Posterior cingulate gyrus (tissue), 11 donors: ENCODE measurements at regions of chr16 and their contacts with region 1.

Region 1: DNA sequence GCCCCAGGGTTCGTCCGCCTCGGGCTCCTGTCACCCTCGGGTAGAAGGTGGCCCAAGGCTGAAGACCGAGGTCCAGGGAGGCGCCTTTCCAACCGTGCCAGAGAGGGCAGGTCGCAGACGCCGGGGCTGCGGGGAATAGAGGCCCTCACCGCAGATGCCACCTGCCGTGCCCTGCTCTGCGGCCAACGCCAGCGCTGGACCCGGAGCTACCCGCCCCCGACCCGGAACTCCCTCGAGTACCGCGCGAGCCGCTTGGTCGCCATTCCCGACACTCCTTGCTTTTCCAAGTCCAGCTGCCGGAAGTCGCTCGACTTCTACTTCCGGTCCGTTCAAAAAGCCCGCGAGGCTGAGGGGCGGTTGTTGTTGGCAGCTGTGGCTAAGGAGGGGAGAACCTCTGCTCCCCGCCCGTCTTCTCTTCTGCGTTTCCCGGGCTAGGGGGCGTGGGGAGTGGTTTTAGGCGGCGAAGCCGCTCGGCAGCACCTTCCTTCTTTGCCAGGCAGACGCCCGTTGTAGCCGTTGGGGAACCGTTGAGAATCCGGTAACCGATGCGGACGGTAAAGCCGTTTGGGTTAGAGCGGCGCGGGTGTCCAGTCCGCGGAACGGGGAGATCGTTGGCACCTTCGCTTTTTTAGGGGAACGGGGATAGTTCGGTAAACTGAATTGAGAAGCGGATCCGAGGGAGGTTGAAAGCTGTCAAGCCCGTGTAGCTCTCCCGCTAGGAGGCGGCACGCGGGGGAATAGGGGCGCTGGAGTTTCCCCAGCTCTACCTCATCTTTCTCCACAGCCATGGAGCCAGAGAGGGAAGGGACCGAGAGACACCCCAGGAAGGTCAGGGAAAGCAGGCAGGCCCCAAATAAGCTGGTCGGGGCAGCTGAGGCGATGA is at the starts of genes ERI2 and REXO5:
- DNase-seq: peak; percentile 85 to 98 (median 92)

Region 2: GRCh38 chr16:20711277-20711911 is 95.0 kb before region 1 on chr16:
- intact Hi-C with region 1: no loop called
- DNase-seq: no peak

Region 3: GRCh38 chr16:20741554-20742285 is 64.7 kb before region 1 on chr16 and contains the start of gene THUMPD1:
- intact Hi-C with region 1: loop called (anchors 5 kb)
- DNase-seq: peak; percentile 92 to 99 (median 96)

Region 4: DNA sequence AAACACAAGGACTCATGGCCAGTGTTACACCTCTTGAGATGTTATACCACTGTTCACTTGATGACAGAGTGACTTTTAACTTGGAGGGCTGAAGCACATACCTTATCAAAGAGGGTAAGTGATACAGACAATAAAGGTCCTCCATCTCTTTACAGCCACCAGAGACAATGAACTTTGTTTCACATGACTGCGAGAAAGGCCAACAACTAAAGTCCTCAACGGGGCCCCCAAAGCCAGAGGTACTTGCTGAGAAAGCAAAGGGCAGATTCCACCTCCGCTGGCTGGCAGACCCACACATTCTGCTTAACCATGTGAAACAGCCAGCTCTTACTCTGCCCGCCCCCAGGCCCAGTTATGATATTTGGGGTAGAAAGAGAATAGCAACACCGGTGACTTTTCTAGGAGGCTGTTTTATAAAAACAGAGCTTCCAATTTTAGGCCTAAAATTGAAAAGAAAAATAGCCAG is 72.3 kb after region 1 on chr16:
- intact Hi-C with region 1: no loop called
- DNase-seq: no peak

Region 5: DNA sequence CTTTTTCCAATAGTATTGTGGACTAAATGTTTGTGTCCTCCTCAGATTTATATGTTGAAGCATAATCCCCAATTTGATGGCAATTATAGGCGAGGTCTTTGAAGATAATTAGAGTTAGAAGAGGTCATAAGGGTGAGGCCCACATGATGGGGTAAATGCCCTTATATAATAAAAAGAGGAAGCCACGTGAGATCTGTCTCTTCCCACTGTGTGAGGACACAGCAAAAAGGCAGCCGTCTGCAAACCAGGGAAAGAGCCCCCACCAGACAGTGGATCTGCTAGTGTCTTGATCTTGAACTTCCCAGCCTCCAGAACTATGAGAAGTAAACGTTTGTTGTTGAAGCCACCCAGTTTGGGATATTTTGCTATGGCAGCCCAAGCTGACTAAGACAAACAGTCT is 170.2 kb after region 1 on chr16:
- intact Hi-C with region 1: no loop called
- DNase-seq: no peak